ENCODE measurements at regions of chr17 and their contacts with region 1.

Region 1: GRCh38 chr17:72661093-72661944 is 431.2 kb downstream of the SLC39A11 start:
- DNase-seq: peak; percentile 90 to 98
- H3K4me3 ChIP-seq: 0 out of 2 replicates have a peak overlapping the region, but pooled peaks have one; percentile 22
- H3K27ac ChIP-seq: peak overlapping the region; percentile 92
- H3K4me1 ChIP-seq: peaks cover 44% of the 10 kb centered on the region
- H3K27me3 ChIP-seq: no peaks in the 10 kb centered on the region
- CTCF ChIP-seq: peak; percentile 63

Region 2: DNA sequence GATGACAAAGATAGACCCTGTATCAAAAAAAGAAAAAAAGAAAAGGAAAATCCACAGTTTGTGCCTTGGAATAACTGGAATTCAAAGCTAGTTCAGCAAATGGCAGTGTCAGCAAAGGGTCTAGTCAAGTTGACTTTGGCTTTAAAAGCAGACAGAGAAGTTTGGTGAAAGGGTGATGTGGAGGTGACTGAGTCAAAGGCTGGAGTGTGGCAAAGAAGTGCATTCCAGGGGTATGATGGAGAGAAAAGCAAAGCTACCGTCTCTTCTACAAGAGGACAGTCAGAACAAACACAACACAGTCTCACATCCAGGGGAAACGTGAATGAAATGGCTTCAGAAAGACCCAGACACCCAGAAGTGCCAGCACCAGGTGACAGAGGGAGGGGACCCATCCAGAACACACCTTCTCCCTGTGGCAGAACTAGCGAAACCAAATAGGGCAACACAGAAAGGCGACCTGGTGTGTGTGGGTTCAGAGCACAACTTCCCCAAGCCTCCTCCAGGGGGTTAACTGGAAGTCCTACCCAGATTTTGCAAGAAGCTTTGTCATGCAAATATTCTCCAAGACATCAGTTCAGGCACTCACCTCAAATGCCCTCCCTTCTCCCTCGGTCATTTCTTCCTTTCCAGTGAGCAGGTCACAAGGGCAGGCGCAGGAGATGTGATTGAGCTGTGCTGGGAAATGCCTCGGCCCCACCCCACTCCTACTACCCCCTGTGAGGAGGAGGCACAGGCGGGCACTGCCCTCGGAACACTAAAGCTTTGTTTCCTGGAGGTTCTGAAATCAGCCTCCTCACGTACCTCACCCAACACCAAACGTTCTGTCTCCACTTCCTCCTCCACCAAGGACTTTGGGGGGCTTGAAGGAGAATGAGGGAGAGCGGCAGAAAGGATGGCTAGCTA is 58.6 kb before region 1 on chr17:
- CTCF ChIA-PET with region 1: no interaction called
- POLR2A ChIA-PET with region 1: no interaction called
- intact Hi-C with region 1: loop called (anchors 1 kb)
- DNase-seq: peak; percentile 81 to 96
- H3K4me3 ChIP-seq: peak overlapping the region; percentile 40
- H3K27ac ChIP-seq: peak overlapping the region; percentile 87
- H3K4me1 ChIP-seq: peaks cover 53% of the 10 kb centered on the region
- H3K27me3 ChIP-seq: no peaks in the 10 kb centered on the region
- CTCF ChIP-seq: peak; percentile 56

Region 3: GRCh38 chr17:72634681-72635635 is 26.4 kb before region 1 on chr17:
- CTCF ChIA-PET with region 1: no interaction called
- POLR2A ChIA-PET with region 1: no interaction called
- intact Hi-C with region 1: loop called (anchors 1 kb)
- DNase-seq: peak; percentile 71 to 73
- H3K4me3 ChIP-seq: no peak overlapping the region
- H3K27ac ChIP-seq: 0 out of 2 replicates have a peak overlapping the region, but pooled peaks have one; percentile 36
- H3K4me1 ChIP-seq: peaks cover 28% of the 10 kb centered on the region
- H3K27me3 ChIP-seq: no peaks in the 10 kb centered on the region
- CTCF ChIP-seq: no peak

Measured in PC-9 (cell line).